ENCODE measurements at regions of chr17 and their contacts with region 1.

Region 1: GRCh38 chr17:29369831-29370735 is 20.1 kb upstream of the TAOK1 start:
- DNase-seq: peak; percentile 86
- H3K4me3 ChIP-seq: peak overlapping the region; percentile 43
- H3K27ac ChIP-seq: no peak overlapping the region
- H3K4me1 ChIP-seq: no peaks in the 10 kb centered on the region
- CTCF ChIP-seq: peak; percentile 96

Region 2: GRCh38 chr17:29533976-29534375 is 163.9 kb after region 1 on chr17:
- CTCF ChIA-PET with region 1: interaction called, 7 read pairs
- POLR2A ChIA-PET with region 1: interaction called, 5 read pairs
- intact Hi-C with region 1: loop called (anchors 1 kb)
- DNase-seq: no peak
- H3K4me3 ChIP-seq: no peak overlapping the region
- H3K27ac ChIP-seq: no peak overlapping the region
- H3K4me1 ChIP-seq: no peaks in the 10 kb centered on the region
- CTCF ChIP-seq: no peak

Region 3: DNA sequence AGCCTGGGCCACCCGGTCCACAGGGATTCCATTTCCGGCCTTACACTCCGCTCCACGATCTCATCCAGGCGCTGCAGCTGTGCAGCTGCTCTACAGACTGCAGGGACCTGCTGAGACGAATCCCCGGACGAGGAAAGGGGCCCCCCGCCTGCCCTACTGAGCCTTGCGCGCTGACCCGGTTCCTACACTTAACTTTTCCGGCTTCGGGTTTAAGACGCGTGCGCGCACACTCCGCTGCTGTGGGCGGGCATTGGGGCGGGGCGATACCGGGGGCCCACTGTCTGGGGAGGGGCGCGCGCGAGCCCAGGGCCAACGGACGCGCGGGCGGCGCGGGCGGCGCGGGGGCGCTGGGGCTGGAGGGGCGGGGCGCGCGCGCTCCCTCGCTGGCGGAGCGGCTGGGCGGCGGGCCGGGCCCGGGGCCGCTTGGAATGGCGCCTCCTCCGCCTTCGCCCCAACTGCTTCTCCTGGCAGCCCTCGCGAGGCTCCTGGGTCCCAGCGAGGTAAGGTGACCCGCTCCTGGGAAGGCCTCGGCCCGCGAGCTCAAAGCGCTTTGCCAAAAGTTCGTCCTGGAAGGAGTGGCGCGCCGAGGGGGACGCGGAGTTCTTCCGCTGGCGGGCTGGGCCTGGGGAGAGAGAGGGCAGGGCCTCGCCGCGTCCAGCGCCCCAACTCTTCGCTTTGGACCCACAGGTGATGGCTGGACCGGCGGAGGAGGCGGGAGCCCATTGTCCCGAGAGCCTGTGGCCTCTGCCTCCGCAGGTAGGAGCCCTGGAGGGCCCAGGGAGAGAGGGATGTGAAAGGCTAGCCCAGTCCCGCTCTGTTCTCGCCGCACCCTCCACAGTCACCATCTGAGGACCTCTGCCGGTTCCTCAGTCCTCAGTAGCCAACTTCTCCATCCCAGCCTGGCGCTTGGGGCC is 198.5 kb after region 1 on chr17 and contains the start of gene TP53I13:
- CTCF ChIA-PET with region 1: interaction called, 4 read pairs
- POLR2A ChIA-PET with region 1: interaction called, 4 read pairs
- intact Hi-C with region 1: loop called (anchors 10 kb)
- DNase-seq: peak; percentile 93
- H3K4me3 ChIP-seq: peak within 1 kb of the TSS; percentile 72
- H3K27ac ChIP-seq: peak within 1 kb of the TSS; percentile 68
- H3K4me1 ChIP-seq: peaks cover 29% of the 10 kb centered on the region
- CTCF ChIP-seq: no peak
- total RNA-seq, gene TP53I13: 27.5 and 30.9 TPM in 2 replicates

Measured in OCI-LY7 (cell line).